B cell (primary cell): ENCODE measurements at regions of chr12 and their contacts with region 1.

Region 1: DNA sequence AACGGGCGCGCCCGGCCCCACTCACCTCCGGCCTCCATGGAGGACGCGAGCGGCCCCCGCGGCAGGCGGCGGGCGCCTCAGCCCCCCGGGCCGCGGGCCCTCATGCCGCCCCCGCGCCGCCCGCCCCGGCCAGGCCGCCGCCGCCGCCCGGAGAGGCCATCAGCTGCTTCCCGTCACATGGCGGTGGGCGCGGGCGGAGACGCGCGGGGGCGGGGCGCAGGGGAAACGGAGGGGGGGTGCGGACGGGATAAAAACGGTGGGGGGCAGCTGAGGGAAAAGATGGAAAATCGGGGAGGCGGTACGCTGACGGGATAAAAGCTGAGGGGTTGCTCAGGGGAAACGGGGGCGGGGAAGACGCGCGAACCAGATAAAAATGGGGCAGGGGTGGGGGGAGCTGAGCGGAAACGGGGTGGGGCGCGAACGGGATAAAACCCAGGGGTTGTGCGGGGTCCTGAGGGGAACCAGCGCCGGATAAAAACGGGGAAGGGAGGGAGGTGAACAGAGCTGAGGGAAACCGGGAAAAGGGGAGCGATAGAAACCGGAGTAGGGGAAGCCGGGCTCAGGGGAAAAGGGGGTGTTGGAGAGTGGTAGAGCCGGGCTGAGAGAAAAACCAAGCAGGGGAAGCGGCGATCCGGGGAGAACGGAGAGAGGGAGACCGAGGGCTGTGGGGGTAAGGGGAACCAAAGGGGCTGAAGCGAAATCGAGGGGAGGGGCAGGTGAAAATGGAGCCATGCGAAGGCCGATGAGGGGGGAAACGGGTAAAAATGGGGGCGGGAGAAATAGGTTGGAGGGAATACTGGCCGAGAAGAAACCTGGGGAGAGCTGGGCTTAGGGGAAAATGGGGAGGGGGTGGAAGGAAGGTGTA is at the start of gene WSB2:
- DNase-seq: peak; percentile 55
- ATAC-seq: peak; percentile 63
- H3K4me3 ChIP-seq: peak within 1 kb of the TSS; percentile 58 to 92 (median 80)
- H3K4me3 Mint-ChIP-seq: peak within 1 kb of the TSS; percentile 92
- H3K27ac ChIP-seq: peak within 1 kb of the TSS; percentile 56 to 82
- H3K27ac Mint-ChIP-seq: peak within 1 kb of the TSS; percentile 88
- H3K4me1 ChIP-seq: peaks cover 31 to 39% of the 10 kb centered on the region in 2 donors
- H3K4me1 Mint-ChIP-seq: peaks cover 45% of the 10 kb centered on the region
- H3K27me3 ChIP-seq: no peaks in the 10 kb centered on the region
- H3K27me3 Mint-ChIP-seq: peaks cover 3% of the 10 kb centered on the region
- CTCF ChIP-seq: no peak
- total RNA-seq, gene WSB2: 21.4 and 26.8 TPM in 2 replicates

Region 2: GRCh38 chr12:117994551-117995438 is 66.4 kb before region 1 on chr12:
- CTCF ChIA-PET with region 1: no interaction called
- POLR2A ChIA-PET with region 1: no interaction called
- intact Hi-C with region 1: no loop called
- DNase-seq: no peak
- ATAC-seq: no peak
- H3K4me3 ChIP-seq: no peak overlapping the region
- H3K4me3 Mint-ChIP-seq: no peak overlapping the region
- H3K27ac ChIP-seq: no peak overlapping the region
- H3K27ac Mint-ChIP-seq: no peak overlapping the region
- H3K4me1 ChIP-seq: no peaks in the 10 kb centered on the region
- H3K4me1 Mint-ChIP-seq: no peaks in the 10 kb centered on the region
- H3K27me3 ChIP-seq: no peaks in the 10 kb centered on the region
- H3K27me3 Mint-ChIP-seq: peaks cover 10% of the 10 kb centered on the region
- CTCF ChIP-seq: no peak

Region 3: DNA sequence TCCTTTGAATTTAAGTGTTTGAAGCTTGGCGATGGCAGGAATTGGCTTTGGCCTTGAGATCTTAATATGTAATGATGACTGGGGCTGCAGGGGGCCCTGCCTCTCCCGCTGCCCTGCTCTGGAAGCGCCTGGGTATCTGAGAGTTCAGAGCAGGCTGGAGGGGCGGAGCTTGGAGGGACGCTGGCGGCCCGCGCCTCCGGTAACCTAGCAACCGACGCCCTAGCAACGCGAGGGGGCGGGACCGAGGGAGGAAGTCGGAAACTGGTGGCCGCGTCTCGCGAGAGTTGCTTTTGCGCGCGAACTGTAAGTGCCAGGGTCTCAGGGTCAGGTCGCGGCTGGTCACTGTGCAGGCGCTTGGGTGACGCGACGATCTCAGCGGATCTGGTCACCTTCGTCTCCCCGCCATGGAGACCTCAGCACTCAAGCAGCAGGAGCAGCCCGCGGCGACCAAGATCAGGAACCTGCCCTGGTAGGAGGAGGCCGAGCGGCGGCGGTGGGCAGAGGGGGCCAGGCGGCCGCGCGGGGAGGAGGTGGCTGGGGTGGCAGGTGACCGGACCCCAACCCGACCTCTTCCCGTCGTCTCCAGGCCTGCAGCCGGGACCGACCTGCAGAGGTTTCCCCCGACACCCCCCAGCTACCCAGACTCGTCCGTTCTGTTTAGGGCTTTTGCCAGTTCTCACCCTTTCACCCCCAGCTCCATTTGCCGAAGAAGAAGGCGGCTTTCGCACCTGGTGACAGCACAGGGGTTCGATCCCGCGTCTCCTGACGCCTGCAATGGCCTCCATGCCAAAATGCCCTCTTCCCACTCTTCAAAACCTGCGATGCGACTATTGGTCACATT is 44.6 kb before region 1 on chr12 and contains the start of gene RFC5:
- CTCF ChIA-PET with region 1: interaction called, 3 read pairs
- POLR2A ChIA-PET with region 1: no interaction called
- intact Hi-C with region 1: loop called (anchors 1 kb)
- DNase-seq: peak; percentile 98
- ATAC-seq: peak; percentile 98
- H3K4me3 ChIP-seq: peak within 1 kb of the TSS; percentile 51 to 92 (median 81)
- H3K4me3 Mint-ChIP-seq: peak within 1 kb of the TSS; percentile 91
- H3K27ac ChIP-seq: peak within 1 kb of the TSS in 1 of 2 donors; percentile 71
- H3K27ac Mint-ChIP-seq: peak within 1 kb of the TSS; percentile 95
- H3K4me1 ChIP-seq: peaks cover 11 to 16% of the 10 kb centered on the region in 2 donors
- H3K4me1 Mint-ChIP-seq: peaks cover 16% of the 10 kb centered on the region
- H3K27me3 ChIP-seq: no peaks in the 10 kb centered on the region
- H3K27me3 Mint-ChIP-seq: no peaks in the 10 kb centered on the region
- CTCF ChIP-seq: no peak
- total RNA-seq, gene RFC5: 15.0 and 22.7 TPM in 2 replicates

Region 4: GRCh38 chr12:118290130-118290529 is 228.9 kb after region 1 on chr12:
- CTCF ChIA-PET with region 1: no interaction called
- POLR2A ChIA-PET with region 1: no interaction called
- intact Hi-C with region 1: no loop called
- DNase-seq: no peak
- ATAC-seq: no peak
- H3K4me3 ChIP-seq: no peak overlapping the region
- H3K4me3 Mint-ChIP-seq: no peak overlapping the region
- H3K27ac ChIP-seq: no peak overlapping the region
- H3K27ac Mint-ChIP-seq: no peak overlapping the region
- H3K4me1 ChIP-seq: no peaks in the 10 kb centered on the region
- H3K4me1 Mint-ChIP-seq: peaks cover 21% of the 10 kb centered on the region
- H3K27me3 ChIP-seq: no peaks in the 10 kb centered on the region
- H3K27me3 Mint-ChIP-seq: no peaks in the 10 kb centered on the region
- CTCF ChIP-seq: no peak